ENCODE measurements at regions of chr17 and their contacts with region 1.

Region 1: DNA sequence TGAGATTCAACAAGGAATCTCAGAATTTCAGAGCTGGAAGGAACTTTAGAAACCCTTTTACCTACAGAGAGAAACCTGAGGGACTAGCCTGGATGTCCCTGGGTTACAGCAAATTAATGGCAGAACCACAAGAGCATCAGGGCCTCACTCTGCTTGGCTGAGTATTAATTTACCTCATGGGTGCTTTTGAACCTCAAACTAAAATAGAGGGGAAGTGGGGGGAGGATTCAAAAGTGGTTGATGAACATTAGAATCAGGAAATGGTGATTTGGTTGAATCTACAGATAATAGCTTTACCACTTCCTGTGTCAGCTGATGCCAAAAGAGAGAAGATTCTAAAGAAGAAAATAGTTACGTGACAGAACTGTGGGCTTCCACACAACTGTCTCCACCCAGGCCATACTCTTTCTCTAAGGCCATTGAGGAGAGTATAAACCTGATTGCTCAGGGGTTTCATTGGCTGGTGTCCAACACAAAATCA is 11.3 kb upstream of the SKAP1 start:
- DNase-seq: peak; percentile 95
- H3K4me3 ChIP-seq: peak overlapping the region; percentile 53
- H3K27ac ChIP-seq: peak overlapping the region; percentile 96
- H3K4me1 ChIP-seq: peaks cover 88% of the 10 kb centered on the region
- CTCF ChIP-seq: no peak

Region 2: DNA sequence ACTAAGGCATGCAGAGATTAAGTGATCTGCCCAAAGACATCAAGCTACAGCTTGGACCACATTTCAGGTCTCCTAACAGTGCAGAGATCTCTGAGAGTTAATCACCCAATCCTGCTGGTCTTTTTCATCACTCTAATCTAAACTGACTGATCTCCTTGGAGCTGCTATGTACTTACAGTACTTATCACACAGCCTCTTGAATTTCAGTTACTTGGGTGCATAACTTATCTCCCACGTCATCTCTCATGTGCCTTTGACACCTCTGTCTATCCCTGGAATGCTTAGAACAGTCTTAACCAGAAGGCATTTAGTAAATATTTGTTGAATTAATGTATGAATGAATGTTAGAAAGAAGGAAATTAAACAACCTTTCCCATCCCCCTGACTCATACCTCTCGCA is 194.7 kb before region 1 on chr17:
- CTCF ChIA-PET with region 1: no interaction called
- POLR2A ChIA-PET with region 1: no interaction called
- intact Hi-C with region 1: no loop called
- DNase-seq: no peak
- H3K4me3 ChIP-seq: no peak overlapping the region
- H3K27ac ChIP-seq: no peak overlapping the region
- H3K4me1 ChIP-seq: peaks cover 5% of the 10 kb centered on the region
- CTCF ChIP-seq: no peak

Region 3: GRCh38 chr17:48457080-48457836 is 16.0 kb after region 1 on chr17:
- CTCF ChIA-PET with region 1: interaction called, 4 read pairs
- POLR2A ChIA-PET with region 1: interaction called, 37 read pairs
- intact Hi-C with region 1: loop called (anchors 1 kb)
- DNase-seq: peak; percentile 88
- H3K4me3 ChIP-seq: no peak overlapping the region
- H3K27ac ChIP-seq: no peak overlapping the region
- H3K4me1 ChIP-seq: peaks cover 65% of the 10 kb centered on the region
- CTCF ChIP-seq: peak; percentile 98

Region 4: GRCh38 chr17:48465884-48466283 is 24.6 kb after region 1 on chr17:
- CTCF ChIA-PET with region 1: no interaction called
- POLR2A ChIA-PET with region 1: no interaction called
- intact Hi-C with region 1: loop called (anchors 2 kb)
- DNase-seq: no peak
- H3K4me3 ChIP-seq: no peak overlapping the region
- H3K27ac ChIP-seq: no peak overlapping the region
- H3K4me1 ChIP-seq: peaks cover 76% of the 10 kb centered on the region
- CTCF ChIP-seq: no peak